ENCODE measurements at regions of chr2 and their contacts with region 1.

Region 1: GRCh38 chr2:85538486-85539360 is at the start of gene MAT2A:
- DNase-seq: peak; percentile 91

Region 2: GRCh38 chr2:85437488-85438284 is 101.0 kb before region 1 on chr2:
- CTCF ChIA-PET with region 1: interaction called, 4 read pairs
- POLR2A ChIA-PET with region 1: interaction called, 35 read pairs
- DNase-seq: peak; percentile 62

Region 3: DNA sequence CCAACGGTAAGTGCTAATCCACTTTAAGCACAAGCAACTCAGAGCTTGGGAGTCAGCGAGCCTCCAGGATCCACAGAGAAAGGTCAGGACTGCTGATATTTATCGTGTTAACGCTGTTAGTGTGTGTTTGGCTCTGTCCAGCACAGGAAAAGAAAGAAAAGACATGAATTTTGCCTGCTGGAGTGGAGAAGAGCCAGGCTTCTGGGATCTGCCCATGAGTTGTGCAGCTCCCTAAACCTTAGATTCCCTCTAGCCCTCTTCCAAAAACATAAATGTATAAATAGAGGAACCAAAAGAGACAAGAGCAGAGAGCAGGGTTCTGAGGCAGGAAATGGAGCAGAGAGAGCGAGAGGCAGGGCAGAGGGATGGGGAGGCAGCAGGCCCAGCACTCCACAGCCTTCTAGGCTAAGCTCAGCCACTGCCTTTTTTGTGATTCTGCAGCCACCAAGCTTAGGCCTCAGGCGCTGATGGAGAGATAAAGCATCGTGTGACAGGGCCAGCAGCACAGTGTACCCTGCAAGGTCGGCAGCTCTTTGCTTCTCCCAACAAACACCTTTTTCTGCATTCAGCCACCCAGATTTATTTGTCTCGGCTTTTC is 14.3 kb before region 1 on chr2:
- CTCF ChIA-PET with region 1: interaction called, 5 read pairs
- POLR2A ChIA-PET with region 1: interaction called, 42 read pairs
- DNase-seq: peak; percentile 48

Region 4: DNA sequence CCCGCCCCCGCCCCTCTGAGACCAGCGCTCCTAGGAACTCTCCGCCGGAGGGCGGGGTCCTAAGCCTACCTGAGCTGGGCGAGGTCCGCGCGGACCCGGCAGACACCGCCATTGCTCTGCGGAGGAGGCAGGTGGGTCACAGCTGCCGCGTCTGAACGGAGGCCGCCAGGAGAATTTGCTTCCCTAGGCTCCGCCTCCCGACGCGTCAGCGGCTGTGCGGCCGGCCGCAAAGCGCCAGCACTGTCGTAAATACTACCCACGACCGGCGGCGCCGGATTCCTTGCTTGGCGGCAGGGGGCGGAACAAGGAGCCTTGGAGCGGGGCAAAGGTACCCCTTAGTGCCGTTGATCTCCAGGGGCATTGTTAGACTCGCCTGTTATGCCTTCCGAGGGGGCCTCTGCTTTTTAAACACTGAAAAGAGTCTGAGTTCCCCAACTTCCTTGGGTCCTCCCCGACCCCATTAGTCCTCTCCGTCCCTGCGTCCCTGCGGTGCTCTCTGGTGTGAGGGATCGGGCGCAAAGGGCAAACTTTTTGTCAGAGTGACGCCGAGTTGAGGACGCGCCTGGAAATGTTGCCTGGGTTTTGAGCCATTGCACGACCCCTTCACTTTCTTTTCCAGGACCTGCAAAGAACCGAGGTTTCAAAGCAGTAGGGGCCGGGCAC is 22.7 kb after region 1 on chr2 and contains the start of gene GGCX:
- CTCF ChIA-PET with region 1: interaction called, 4 read pairs
- POLR2A ChIA-PET with region 1: interaction called, 21 read pairs
- DNase-seq: peak; percentile 93

Measured in HEK293T (cell line).